ENCODE measurements at regions of chr19 and their contacts with region 1.

Region 1: DNA sequence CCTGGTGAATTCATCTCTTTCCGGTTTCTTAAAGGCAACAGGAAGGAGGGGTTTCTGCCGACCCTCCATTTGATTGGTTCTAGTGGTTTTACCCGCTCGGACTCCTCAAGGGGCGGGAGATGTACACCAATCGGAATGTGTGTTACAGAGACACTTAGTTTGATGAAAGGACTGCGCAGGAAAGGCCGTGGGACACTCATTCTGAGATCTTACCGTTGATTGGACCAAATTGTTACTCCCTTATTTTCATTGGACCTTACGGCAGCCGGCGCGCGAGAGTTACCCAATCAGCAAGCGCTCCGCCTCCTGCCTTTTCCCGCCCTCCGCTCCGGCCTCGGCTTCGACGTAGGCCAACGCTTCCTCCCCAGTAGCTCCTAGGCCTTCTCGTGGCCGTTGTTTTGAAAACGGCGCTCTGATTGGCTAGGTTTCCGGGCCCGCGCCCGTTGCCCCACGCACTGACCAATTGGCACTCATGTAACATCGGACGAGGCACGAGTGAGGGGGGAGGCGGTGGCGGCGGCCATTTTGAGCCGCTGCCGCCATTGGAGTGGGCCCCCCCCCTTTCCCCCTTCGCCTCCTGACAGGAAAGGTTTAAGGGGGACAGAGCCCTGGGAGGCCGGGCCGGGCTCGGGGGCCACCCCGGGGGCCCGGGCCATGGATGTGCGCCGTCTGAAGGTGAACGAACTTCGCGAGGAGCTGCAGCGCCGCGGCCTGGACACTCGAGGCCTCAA is at the start of gene HNRNPUL1:
- DNase-seq: peak; percentile 99 to 100 (median 99)
- H3K4me3 ChIP-seq: peak within 1 kb of the TSS; percentile 63 to 98 (median 87)
- H3K27ac ChIP-seq: peak within 1 kb of the TSS; percentile 98 to 100 (median 99)
- H3K4me1 ChIP-seq: peaks cover 25 to 32% of the 10 kb centered on the region in 2 donors
- H3K27me3 ChIP-seq: no peaks in the 10 kb centered on the region
- CTCF ChIP-seq: peak in 3 of 6 experiments; percentile 13 to 28 (median 13)
- POLR2A ChIP-seq: no peak
- total RNA-seq, gene HNRNPUL1: 55.8 to 175 (median 146) TPM

Region 2: DNA sequence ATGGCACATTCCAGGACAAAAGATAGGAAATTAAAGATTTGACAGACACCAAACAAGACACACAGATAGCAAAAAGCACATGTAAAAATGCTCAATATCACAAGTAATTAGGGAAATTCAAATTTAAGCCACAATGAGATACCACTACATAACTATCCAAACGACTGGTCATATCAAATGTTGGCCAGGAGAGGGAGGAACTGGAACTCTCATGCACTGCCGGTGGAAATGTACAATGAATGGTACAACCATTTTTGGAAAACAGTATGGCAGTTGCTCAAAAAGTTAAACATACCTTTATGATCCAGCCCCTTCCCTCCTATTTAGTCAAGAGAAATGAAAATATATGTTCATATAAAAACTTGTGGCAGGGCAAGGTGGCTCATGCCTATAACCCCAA is 107.8 kb before region 1 on chr19:
- intact Hi-C with region 1: no loop called
- DNase-seq: no peak
- H3K4me3 ChIP-seq: no peak overlapping the region
- H3K27ac ChIP-seq: no peak overlapping the region
- H3K4me1 ChIP-seq: no peaks in the 10 kb centered on the region
- H3K27me3 ChIP-seq: no peaks in the 10 kb centered on the region
- CTCF ChIP-seq: no peak
- POLR2A ChIP-seq: no peak

Region 3: GRCh38 chr19:41206926-41207750 is 56.9 kb before region 1 on chr19:
- intact Hi-C with region 1: loop called in 1 of 2 experiments (anchors 2 kb)
- DNase-seq: peak in 1 of 7 donors; percentile 28
- H3K4me3 ChIP-seq: no peak overlapping the region
- H3K27ac ChIP-seq: peak overlapping the region in 1 of 5 donors; percentile 49
- H3K4me1 ChIP-seq: no peaks in the 10 kb centered on the region
- H3K27me3 ChIP-seq: no peaks in the 10 kb centered on the region
- CTCF ChIP-seq: no peak
- POLR2A ChIP-seq: no peak

Region 4: DNA sequence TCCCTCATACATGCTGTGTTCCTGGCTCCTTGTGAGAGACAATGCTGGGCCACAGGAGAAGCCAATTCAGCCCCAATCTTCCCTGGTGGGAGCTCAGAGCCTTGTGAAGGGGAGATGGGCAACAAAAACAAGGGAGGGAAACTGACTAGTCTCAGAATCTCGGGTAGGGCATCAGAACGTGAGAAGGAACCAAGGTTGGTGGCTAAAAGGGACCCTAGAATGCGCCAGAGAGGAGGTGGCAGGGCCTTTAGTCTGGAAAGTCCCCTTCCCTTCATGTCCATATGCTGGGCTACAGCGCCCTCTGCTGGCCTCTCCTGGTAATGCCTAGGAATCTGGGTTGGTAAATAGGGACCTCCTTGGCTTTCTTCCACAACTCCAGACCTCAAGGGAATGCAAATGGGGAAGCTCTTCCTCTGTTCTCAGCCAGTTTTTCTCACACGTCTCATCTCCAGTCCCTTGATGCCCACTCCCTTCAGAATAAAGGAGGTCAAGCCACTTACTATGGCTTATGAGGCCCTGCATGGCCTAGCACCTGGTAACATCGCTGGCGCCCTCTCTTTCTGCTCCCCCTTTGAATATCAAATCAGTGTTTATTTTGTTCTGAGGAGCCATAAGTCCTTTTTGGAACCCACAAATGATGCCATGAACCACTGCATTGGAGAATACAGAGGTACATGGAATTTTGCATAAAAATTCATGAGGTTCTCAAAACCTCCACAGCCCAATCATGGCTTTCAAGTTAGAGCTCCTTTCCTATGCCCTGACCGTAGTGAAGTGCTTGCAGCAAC is 44.6 kb after region 1 on chr19:
- intact Hi-C with region 1: loop called in 1 of 2 experiments (anchors 2 kb)
- DNase-seq: peak; percentile 91 to 98 (median 95)
- H3K4me3 ChIP-seq: peak overlapping the region in 1 of 4 donors; percentile 84
- H3K27ac ChIP-seq: peak overlapping the region; percentile 91 to 99 (median 96)
- H3K4me1 ChIP-seq: peaks cover 21 to 37% of the 10 kb centered on the region in 2 donors
- H3K27me3 ChIP-seq: no peaks in the 10 kb centered on the region
- CTCF ChIP-seq: peak; percentile 97 to 98 (median 98)
- POLR2A ChIP-seq: no peak

Region 5: GRCh38 chr19:41521931-41522555 is 258.0 kb after region 1 on chr19:
- intact Hi-C with region 1: no loop called
- DNase-seq: peak in 1 of 7 donors; percentile 28
- H3K4me3 ChIP-seq: peak overlapping the region in 1 of 4 donors; percentile 51
- H3K27ac ChIP-seq: peak overlapping the region in 4 of 5 donors; percentile 17 to 86 (median 62)
- H3K4me1 ChIP-seq: no peaks in the 10 kb centered on the region
- H3K27me3 ChIP-seq: peaks cover 58% of the 10 kb centered on the region
- CTCF ChIP-seq: no peak
- POLR2A ChIP-seq: no peak